ENCODE measurements at regions of chr12 and their contacts with region 1.

Region 1: GRCh38 chr12:74264692-74265091 is 272.9 kb upstream of the ATXN7L3B start:
- DNase-seq: no peak
- H3K4me3 ChIP-seq: no peak overlapping the region
- CTCF ChIP-seq: no peak

Region 2: GRCh38 chr12:73598626-73599025 is 666.1 kb before region 1 on chr12:
- in situ Hi-C with region 1: no loop called
- DNase-seq: no peak
- H3K4me3 ChIP-seq: no peak overlapping the region
- CTCF ChIP-seq: no peak

Region 3: GRCh38 chr12:74185360-74185759 is 79.3 kb before region 1 on chr12:
- in situ Hi-C with region 1: no loop called
- DNase-seq: no peak
- H3K4me3 ChIP-seq: no peak overlapping the region
- CTCF ChIP-seq: no peak

Region 4: GRCh38 chr12:74370608-74371216 is 106.0 kb after region 1 on chr12:
- in situ Hi-C with region 1: loop called (anchors 5 kb)
- DNase-seq: no peak
- H3K4me3 ChIP-seq: no peak overlapping the region
- CTCF ChIP-seq: no peak

Region 5: DNA sequence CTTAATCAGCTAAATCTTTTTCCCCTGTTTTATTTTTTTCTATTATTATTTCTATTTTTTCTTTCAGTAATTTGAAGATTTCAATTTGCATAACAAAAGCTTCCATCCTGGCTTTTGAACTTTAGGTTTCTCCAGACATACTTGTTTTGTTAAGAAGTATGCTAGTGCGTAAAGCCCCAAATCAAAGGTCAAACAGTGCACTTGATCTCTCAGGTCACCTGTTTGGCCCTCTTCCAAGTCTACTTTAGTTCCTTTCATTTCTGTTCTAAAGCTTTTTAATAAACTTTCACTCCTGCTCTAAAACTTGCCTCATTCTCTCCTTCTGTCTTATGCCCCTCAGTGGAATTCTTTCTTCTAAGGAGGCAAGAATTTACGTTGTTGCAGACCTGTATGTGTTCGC is 218.4 kb after region 1 on chr12:
- in situ Hi-C with region 1: no loop called
- DNase-seq: no peak
- H3K4me3 ChIP-seq: no peak overlapping the region
- CTCF ChIP-seq: no peak